ENCODE measurements at regions of chr11 and their contacts with region 1.

Region 1: DNA sequence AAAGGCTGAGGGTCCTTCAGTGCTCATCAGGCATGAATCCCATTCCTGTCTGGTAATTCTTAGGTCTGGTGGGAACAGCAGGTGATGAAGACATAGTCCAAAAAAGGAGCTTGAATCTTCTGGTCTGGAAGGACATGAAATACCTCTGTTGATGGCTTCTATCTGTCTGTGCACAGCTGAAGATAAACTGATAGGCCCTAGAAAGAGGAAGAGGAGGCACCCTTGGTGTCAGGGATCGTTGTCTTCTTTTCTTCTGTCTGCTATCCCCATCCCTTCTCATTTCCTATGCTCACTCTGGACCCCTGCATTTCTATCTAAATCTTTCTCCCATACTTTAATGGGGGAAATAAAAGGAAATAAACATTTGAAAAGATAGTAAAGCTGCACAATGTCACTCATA is 9.4 kb downstream of the AGBL2 start:
- DNase-seq: no peak
- ATAC-seq: no peak

Region 2: DNA sequence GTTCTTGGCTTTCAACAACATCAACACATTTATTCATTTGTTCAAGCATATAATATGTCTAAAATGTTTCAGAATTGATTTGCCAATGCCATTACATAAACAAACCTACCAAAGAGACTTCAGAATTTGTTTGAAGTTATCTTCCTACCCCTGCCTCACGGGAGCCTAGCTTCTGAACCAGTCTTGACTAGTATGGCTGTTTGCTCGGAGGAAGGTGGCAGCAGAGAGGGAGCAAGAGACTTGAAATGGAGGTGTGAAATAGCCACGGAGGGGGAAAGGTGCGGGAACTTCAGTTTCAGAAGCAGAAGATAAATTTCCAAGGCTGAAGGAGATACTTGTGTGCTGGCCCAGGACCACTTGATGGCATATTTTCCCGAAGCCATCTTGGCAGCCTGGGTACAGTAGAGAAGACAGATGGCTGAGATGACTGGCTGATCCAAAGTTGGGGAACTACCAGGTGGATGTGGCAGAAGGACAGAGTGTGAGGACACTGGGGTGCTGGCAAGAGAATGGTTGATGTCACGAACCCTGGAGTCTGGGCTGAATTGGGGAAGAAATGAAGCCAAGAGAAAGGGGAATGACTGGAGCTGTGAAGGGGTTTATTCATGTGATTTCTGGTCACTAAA is 49.3 kb before region 1 on chr11:
- intact Hi-C with region 1: loop called in 1 of 2 experiments (anchors 5 kb)
- DNase-seq: no peak
- ATAC-seq: no peak